OCI-LY7 (cell line): ENCODE measurements at regions of chr19 and their contacts with region 1.

Region 1: GRCh38 chr19:43519436-43520088 is 7.4 kb downstream of the ETHE1 start:
- DNase-seq: peak; percentile 81
- H3K4me3 ChIP-seq: no peak overlapping the region
- H3K27ac ChIP-seq: no peak overlapping the region
- H3K4me1 ChIP-seq: no peaks in the 10 kb centered on the region
- CTCF ChIP-seq: peak; percentile 95

Region 2: GRCh38 chr19:43430142-43430710 is 89.3 kb before region 1 on chr19:
- CTCF ChIA-PET with region 1: no interaction called
- POLR2A ChIA-PET with region 1: no interaction called
- intact Hi-C with region 1: loop called (anchors 5 kb)
- DNase-seq: no peak
- H3K4me3 ChIP-seq: no peak overlapping the region
- H3K27ac ChIP-seq: no peak overlapping the region
- H3K4me1 ChIP-seq: no peaks in the 10 kb centered on the region
- CTCF ChIP-seq: 0 out of 2 replicates have a peak, but pooled peaks have one; percentile 31

Region 3: DNA sequence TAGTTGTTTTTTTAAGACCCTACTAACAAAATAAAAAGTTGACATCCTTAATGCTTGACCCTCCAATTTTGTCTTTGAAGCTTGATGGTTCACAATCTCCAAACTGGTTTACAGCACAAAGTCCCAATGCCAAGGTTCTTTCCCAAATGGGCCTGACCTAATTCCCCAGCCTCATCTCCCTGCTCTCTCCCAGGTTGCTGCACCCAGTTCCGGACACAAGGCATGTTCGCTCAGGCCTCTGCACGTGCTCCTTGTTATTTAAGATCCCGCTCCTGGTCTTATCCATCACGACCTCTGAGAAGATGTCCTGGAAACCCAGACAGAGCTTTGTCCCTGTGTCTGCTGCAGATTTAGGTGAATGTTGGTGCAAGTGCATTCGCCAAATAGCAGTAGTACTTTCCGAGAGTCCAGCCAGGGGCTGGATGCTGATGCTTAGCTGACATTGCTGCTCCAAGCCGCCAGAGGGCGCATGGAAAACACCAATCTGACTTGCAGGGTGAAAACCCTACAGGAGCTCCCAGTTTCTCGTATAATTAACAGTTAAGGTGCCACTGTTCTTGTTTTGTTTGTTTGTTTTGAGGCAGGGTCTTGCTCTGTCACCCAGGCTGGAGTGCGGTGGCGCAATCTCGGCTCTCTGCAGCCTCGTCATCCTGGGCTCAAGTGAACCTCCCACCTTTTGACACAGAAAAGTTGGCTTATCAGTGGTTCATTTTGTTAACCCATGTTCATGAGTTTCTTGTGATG is 72.6 kb before region 1 on chr19:
- CTCF ChIA-PET with region 1: interaction called, 7 read pairs
- POLR2A ChIA-PET with region 1: interaction called, 5 read pairs
- intact Hi-C with region 1: loop called (anchors 1 kb)
- DNase-seq: peak; percentile 77
- H3K4me3 ChIP-seq: no peak overlapping the region
- H3K27ac ChIP-seq: no peak overlapping the region
- H3K4me1 ChIP-seq: no peaks in the 10 kb centered on the region
- CTCF ChIP-seq: peak; percentile 94